Ascending aorta (tissue), 2 donors: ENCODE measurements at regions of chr1 and their contacts with region 1.

Region 1: DNA sequence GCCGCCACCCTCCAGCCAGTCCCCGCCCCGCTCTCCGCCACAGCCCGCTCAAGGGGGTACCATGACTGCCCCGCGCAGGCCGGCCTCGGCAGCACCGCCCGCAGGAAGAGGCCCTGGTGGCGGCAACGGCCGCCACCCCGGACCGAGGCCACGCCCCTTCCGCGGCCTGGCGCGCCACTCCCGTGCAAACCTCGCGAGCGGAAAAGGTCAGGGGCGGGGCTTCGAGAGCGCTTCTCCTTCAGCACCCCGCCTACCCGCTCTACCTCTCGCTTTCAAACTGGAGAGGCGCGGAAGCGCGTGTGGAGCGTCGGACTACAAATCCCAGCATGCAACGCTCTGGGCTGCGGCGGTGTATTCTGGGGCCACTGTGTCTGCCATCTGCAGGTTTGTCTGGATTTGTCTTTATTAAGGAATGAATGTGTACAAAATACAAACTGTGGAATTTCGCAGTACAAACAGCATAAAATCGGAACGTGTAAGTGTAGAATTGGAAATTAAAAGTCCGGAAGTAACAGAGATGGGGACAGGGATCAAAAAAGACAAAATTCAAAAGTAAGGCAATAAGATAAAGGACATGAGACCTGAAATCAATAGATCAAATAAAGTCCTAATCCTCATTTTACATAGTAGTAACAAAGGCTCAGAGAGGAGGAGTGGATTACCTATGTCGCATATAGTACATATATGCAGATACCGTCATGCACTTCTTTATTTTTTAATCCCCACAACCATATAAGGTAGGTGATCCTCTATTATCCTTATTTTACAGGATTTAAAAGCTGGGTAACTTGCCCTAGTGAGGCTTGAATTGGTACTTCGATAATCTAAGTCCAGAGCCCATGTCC is 464 bp upstream of the ADSS2 start:
- DNase-seq: peak; percentile 98 to 99
- H3K4me3 ChIP-seq: peak overlapping the region; percentile 89 to 95
- H3K27ac ChIP-seq: peak overlapping the region; percentile 96 to 98
- H3K4me1 ChIP-seq: peaks cover 0 to 23% of the 10 kb centered on the region in 2 donors
- H3K27me3 ChIP-seq: no peaks in the 10 kb centered on the region
- CTCF ChIP-seq: peak; percentile 32 to 61 (median 56)

Region 2: GRCh38 chr1:243850452-243851256 is 601.5 kb before region 1 on chr1:
- intact Hi-C with region 1: loop called (anchors 5 kb)
- DNase-seq: peak; percentile 32 to 86
- H3K4me3 ChIP-seq: peak overlapping the region; percentile 89 to 99
- H3K27ac ChIP-seq: peak overlapping the region; percentile 96 to 97
- H3K4me1 ChIP-seq: peaks cover 0 to 8% of the 10 kb centered on the region in 2 donors
- H3K27me3 ChIP-seq: no peaks in the 10 kb centered on the region
- CTCF ChIP-seq: no peak

Region 3: GRCh38 chr1:244047621-244048471 is 404.3 kb before region 1 on chr1:
- intact Hi-C with region 1: loop called (anchors 5 kb)
- DNase-seq: peak; percentile 97 to 99
- H3K4me3 ChIP-seq: peak overlapping the region; percentile 83 to 98
- H3K27ac ChIP-seq: peak overlapping the region; percentile 97 to 98
- H3K4me1 ChIP-seq: peaks cover 0 to 14% of the 10 kb centered on the region in 2 donors
- H3K27me3 ChIP-seq: no peaks in the 10 kb centered on the region
- CTCF ChIP-seq: no peak

Region 4: DNA sequence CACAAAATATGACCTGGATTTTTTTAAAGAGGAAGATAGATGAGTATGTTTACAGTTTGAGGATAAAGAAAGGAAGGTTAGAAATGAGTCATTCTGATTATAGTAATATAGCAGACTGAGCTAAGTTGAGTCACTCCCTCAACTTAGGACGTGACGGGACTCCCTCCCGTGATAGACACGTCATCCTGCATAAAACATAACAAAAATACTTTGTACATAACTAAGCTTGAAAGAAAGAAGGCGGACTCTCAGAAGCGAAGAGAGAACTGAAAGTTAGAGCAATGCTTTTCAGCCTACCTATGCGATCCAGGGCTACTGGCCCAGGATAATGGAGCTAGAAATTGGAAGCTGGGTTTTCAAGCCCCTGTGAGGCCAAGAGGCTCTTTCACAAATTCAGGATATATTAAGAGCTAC is 147.8 kb after region 1 on chr1:
- intact Hi-C with region 1: loop called (anchors 2 kb)
- DNase-seq: peak; percentile 18 to 76
- H3K4me3 ChIP-seq: peak overlapping the region in 1 of 2 donors; percentile 21
- H3K27ac ChIP-seq: peak overlapping the region in 1 of 2 donors; percentile 45
- H3K4me1 ChIP-seq: no peaks in the 10 kb centered on the region
- H3K27me3 ChIP-seq: no peaks in the 10 kb centered on the region
- CTCF ChIP-seq: no peak

Region 5: DNA sequence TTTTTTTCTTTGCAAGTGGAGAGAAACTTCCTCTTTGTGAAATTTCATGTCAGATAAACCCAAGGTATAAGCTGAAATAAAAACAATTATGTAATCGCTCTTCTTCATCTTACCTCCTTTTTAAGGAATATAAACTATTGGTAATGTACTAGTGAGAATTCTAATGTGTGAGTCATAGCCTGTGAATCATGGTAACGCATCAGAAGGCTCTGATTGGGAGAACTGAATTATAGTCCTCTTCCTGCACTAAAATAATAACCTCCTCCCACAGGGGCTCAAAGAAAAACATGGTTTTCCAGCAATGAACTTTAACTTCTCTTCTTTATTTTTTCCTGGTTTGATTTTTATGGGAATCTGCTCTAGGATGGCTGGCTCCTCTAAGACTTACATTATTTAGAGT is 326.2 kb after region 1 on chr1:
- intact Hi-C with region 1: no loop called
- DNase-seq: no peak
- H3K4me3 ChIP-seq: no peak overlapping the region
- H3K27ac ChIP-seq: no peak overlapping the region
- H3K4me1 ChIP-seq: no peaks in the 10 kb centered on the region
- H3K27me3 ChIP-seq: no peaks in the 10 kb centered on the region
- CTCF ChIP-seq: no peak

Region 6: DNA sequence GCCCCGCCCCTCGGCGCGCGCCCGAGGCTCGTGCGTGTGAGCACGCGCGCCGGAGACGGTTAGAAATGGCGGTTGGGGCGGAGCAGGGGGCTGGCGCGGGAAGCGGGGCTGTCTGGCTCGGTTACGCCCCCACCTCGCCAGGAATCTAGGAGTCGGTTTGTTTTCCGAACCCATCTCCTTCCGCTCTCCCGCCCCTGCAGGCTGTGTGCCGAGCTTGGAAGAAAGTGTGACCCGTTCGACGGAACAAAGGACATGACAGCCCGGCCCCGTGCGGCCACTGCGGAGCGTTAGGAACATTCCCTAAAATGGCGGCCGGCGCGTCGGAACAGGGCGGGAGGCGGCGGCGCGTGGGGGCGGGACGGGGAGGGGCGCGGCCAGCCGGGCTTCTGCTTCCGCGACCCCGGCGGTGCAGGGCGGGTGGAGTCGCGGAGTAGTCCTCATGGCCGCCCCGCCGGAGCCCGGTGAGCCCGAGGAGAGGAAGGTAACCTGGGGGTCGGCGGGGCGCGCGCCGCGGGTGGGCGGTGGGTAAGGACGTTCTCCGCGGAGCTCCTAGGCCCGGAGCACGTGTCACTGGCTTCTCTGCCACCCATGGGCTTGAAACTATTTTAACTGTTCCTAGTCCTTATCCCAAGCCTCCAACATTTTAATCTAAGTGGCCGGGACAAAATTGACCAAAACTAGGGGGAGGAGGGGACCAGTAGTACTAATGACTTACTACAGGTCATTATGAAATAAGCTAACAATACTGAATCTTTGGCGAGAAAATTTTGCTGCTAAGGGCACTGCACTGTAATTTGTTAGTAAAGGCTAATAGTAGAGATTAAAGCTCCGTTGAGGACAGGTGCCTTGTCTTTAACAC is 383.3 kb after region 1 on chr1 and contains the start of gene COX20:
- intact Hi-C with region 1: loop called (anchors 10 kb)
- DNase-seq: peak; percentile 50 to 93
- H3K4me3 ChIP-seq: peak within 1 kb of the TSS; percentile 67 to 76
- H3K27ac ChIP-seq: peak within 1 kb of the TSS; percentile 98 to 99
- H3K4me1 ChIP-seq: peaks cover 0 to 16% of the 10 kb centered on the region in 2 donors
- H3K27me3 ChIP-seq: no peaks in the 10 kb centered on the region
- CTCF ChIP-seq: no peak
- total RNA-seq, gene COX20: 8.2 TPM

Region 7: GRCh38 chr1:244970661-244971551 is 518.7 kb after region 1 on chr1:
- intact Hi-C with region 1: loop called (anchors 2 kb)
- DNase-seq: peak; percentile 69 to 95
- H3K4me3 ChIP-seq: peak overlapping the region; percentile 73 to 80
- H3K27ac ChIP-seq: peak overlapping the region; percentile 99
- H3K4me1 ChIP-seq: peaks cover 0 to 9% of the 10 kb centered on the region in 2 donors
- H3K27me3 ChIP-seq: no peaks in the 10 kb centered on the region
- CTCF ChIP-seq: peak; percentile 46 to 78 (median 69)